ENCODE measurements at regions of chr12 and their contacts with region 1.

Region 1: DNA sequence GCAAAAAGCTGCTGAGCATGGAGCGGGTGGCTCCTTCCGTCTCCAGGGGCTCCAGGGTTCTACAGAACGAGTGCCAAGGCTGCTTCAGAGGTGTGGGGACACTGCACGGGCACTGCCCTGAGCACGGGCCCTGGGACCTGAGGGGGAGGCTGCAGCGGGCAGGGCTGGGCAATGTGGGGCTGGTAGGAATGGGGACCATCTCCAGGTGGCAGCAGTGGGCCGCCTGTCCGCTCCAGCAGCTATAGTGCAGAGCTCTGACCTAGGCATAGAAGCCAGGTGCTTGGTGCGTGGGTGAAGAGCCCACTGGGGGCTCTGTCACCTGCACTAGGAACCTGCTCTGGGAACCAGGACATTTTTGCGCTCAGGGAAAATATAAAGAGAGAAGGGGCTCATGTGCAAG is 22.3 kb downstream of the HDAC7 start:
- DNase-seq: peak; percentile 56
- ATAC-seq: peak; percentile 57
- H3K4me3 Mint-ChIP-seq: no peak overlapping the region
- H3K27ac Mint-ChIP-seq: peak overlapping the region; percentile 46
- H3K4me1 Mint-ChIP-seq: peaks cover 41% of the 10 kb centered on the region
- H3K27me3 Mint-ChIP-seq: no peaks in the 10 kb centered on the region
- CTCF ChIP-seq: peak; percentile 19

Region 2: DNA sequence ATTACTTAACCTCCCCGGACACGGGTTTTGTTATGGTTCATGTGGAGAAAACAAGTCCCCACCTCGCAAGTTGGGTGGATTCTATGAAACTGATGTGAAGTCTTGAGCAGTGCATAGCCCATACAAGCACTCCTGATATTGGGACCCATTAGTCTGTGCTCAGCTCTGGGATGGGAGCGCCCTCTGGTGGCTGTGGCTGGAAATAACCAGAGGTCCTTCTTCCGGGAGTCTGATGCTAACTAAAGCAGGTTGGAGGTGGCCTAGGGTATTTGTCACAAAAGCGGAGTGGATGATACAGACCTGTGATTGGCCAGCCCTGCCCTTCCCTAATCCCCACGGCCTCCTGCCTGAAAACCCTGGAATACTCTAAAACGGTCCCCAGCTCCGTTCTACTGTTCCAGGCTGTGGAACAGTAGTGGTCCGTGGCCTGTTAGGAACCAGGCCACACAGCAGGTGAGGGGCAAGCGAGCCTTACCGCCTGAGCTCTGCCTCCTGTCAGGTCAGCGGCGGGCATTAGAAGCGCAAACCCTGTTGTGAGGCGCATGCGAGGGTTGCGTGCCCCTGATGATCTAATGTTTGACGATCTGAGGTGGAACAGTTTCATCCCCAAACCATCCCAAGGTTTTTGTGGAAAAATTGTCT is 18.0 kb before region 1 on chr12:
- CTCF ChIA-PET with region 1: interaction called, 8 read pairs
- POLR2A ChIA-PET with region 1: interaction called, 35 read pairs
- intact Hi-C with region 1: no loop called
- DNase-seq: peak; percentile 96
- ATAC-seq: peak; percentile 80
- H3K4me3 Mint-ChIP-seq: peak overlapping the region; percentile 7
- H3K27ac Mint-ChIP-seq: peak overlapping the region; percentile 18
- H3K4me1 Mint-ChIP-seq: peaks cover 31% of the 10 kb centered on the region
- H3K27me3 Mint-ChIP-seq: no peaks in the 10 kb centered on the region
- CTCF ChIP-seq: peak; percentile 89

Region 3: GRCh38 chr12:47785036-47785886 is 12.2 kb before region 1 on chr12:
- CTCF ChIA-PET with region 1: interaction called, 14 read pairs
- POLR2A ChIA-PET with region 1: interaction called, 35 read pairs
- intact Hi-C with region 1: no loop called
- DNase-seq: no peak
- ATAC-seq: peak; percentile 3
- H3K4me3 Mint-ChIP-seq: no peak overlapping the region
- H3K27ac Mint-ChIP-seq: peak overlapping the region; percentile 80
- H3K4me1 Mint-ChIP-seq: peaks cover 35% of the 10 kb centered on the region
- H3K27me3 Mint-ChIP-seq: no peaks in the 10 kb centered on the region
- CTCF ChIP-seq: no peak

Region 4: DNA sequence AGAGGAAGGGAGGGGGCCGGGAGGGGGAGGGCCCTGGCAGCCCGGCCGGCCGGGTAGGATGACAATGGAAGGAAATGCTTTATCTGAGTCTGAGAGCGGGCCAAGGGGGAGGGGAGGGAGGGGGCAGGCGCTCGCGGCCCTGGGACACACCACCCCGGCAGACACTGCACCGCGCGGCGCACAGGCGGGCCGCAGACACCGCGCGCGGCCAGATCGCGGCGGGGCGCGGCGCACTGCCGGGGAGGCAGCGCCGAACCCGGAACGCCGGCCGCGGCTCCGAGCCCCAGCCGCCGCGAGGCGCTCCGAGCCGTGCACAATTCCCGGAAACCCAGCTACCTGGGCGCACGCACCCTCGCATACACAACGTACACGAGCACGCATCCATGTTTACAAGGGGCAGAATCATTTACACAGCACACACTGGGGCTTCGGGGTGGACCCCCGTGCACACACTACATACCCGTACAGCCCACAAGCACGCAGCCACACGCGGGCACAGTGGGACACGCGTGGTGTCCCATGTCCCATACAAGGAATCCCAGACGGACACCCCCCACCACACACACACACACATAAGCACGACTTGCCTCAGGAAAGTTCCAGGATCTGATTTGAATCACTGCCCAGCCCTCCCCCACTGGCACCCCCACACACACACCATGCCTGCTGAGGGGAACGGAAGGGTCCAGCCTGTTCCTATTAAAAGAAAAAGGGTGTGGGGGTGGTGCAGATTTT is 22.6 kb after region 1 on chr12 and contains the start of gene HDAC7:
- CTCF ChIA-PET with region 1: interaction called, 624 read pairs
- POLR2A ChIA-PET with region 1: interaction called, 904 read pairs
- intact Hi-C with region 1: no loop called
- DNase-seq: peak; percentile 87
- ATAC-seq: peak; percentile 52
- H3K4me3 Mint-ChIP-seq: peak within 1 kb of the TSS; percentile 90
- H3K27ac Mint-ChIP-seq: peak within 1 kb of the TSS; percentile 99
- H3K4me1 Mint-ChIP-seq: peaks cover 52% of the 10 kb centered on the region
- H3K27me3 Mint-ChIP-seq: no peaks in the 10 kb centered on the region
- CTCF ChIP-seq: no peak
- total RNA-seq, gene HDAC7: 373 to 382 TPM

Measured in activated CD8-positive, alpha-beta T cell treated with anti-CD3 and anti-CD28 coated beads for 36 hours (primary cell).